ENCODE measurements at regions of chr19 and their contacts with region 1.

Region 1: GRCh38 chr19:50357178-50358100 is 8.0 kb downstream of the NAPSA start:
- DNase-seq: peak; percentile 70 to 93 (median 78)
- ATAC-seq: peak; percentile 85
- H3K4me3 ChIP-seq: peak overlapping the region; percentile 43
- H3K27ac ChIP-seq: peak overlapping the region; percentile 95
- H3K4me1 ChIP-seq: peaks cover 36 to 38% of the 10 kb centered on the region in 2 experiments
- H3K27me3 ChIP-seq: no peaks in the 10 kb centered on the region
- CTCF ChIP-seq: peak; percentile 89 to 91 (median 90)
- EP300 ChIP-seq: no peak
- POLR2A ChIP-seq: peak; percentile 3
- RAD21 ChIP-seq: peak; percentile 86 to 91

Region 2: GRCh38 chr19:50173140-50173539 is 184.3 kb before region 1 on chr19:
- CTCF ChIA-PET with region 1: no interaction called
- POLR2A ChIA-PET with region 1: no interaction called
- in situ Hi-C with region 1: no loop called
- intact Hi-C with region 1: no loop called
- DNase-seq: peak in 2 of 4 experiments; percentile 5 to 14
- ATAC-seq: peak; percentile 68
- H3K4me3 ChIP-seq: no peak overlapping the region
- H3K27ac ChIP-seq: no peak overlapping the region
- H3K4me1 ChIP-seq: peaks cover 3% of the 10 kb centered on the region in 2 experiments; a peak in 4 of 5 replicates
- H3K27me3 ChIP-seq: 0 out of 5 replicates have a peak, but pooled peaks cover 0 to 4% of the 10 kb centered on the region in 2 experiments
- CTCF ChIP-seq: no peak
- EP300 ChIP-seq: peak; percentile 18; the same call in 1 of the 2 replicates
- POLR2A ChIP-seq: no peak
- RAD21 ChIP-seq: no peak

Region 3: GRCh38 chr19:50334741-50335421 is 22.6 kb before region 1 on chr19:
- CTCF ChIA-PET with region 1: no interaction called
- POLR2A ChIA-PET with region 1: no interaction called
- in situ Hi-C with region 1: no loop called
- intact Hi-C with region 1: no loop called
- DNase-seq: no peak
- ATAC-seq: no peak
- H3K4me3 ChIP-seq: no peak overlapping the region
- H3K27ac ChIP-seq: no peak overlapping the region
- H3K4me1 ChIP-seq: peaks cover 36 to 51% of the 10 kb centered on the region in 2 experiments; a peak in 4 of 5 replicates
- H3K27me3 ChIP-seq: no peaks in the 10 kb centered on the region
- CTCF ChIP-seq: no peak
- EP300 ChIP-seq: no peak
- POLR2A ChIP-seq: no peak
- RAD21 ChIP-seq: no peak

Region 4: GRCh38 chr19:50376166-50377050 is 19.0 kb after region 1 on chr19 and contains the start of gene NR1H2:
- CTCF ChIA-PET with region 1: no interaction called
- POLR2A ChIA-PET with region 1: interaction called, 29 read pairs
- in situ Hi-C with region 1: no loop called
- intact Hi-C with region 1: no loop called
- DNase-seq: peak; percentile 83 to 99 (median 90)
- ATAC-seq: peak; percentile 77
- H3K4me3 ChIP-seq: peak within 1 kb of the TSS; percentile 85
- H3K27ac ChIP-seq: peak within 1 kb of the TSS; percentile 100
- H3K4me1 ChIP-seq: peaks cover 34 to 55% of the 10 kb centered on the region in 2 experiments
- H3K27me3 ChIP-seq: no peaks in the 10 kb centered on the region
- CTCF ChIP-seq: no peak
- EP300 ChIP-seq: peak; percentile 64
- POLR2A ChIP-seq: peak; percentile 97
- RAD21 ChIP-seq: no peak
- polyA plus RNA-seq, gene NR1H2: 0.11 to 1.5 TPM

Region 5: DNA sequence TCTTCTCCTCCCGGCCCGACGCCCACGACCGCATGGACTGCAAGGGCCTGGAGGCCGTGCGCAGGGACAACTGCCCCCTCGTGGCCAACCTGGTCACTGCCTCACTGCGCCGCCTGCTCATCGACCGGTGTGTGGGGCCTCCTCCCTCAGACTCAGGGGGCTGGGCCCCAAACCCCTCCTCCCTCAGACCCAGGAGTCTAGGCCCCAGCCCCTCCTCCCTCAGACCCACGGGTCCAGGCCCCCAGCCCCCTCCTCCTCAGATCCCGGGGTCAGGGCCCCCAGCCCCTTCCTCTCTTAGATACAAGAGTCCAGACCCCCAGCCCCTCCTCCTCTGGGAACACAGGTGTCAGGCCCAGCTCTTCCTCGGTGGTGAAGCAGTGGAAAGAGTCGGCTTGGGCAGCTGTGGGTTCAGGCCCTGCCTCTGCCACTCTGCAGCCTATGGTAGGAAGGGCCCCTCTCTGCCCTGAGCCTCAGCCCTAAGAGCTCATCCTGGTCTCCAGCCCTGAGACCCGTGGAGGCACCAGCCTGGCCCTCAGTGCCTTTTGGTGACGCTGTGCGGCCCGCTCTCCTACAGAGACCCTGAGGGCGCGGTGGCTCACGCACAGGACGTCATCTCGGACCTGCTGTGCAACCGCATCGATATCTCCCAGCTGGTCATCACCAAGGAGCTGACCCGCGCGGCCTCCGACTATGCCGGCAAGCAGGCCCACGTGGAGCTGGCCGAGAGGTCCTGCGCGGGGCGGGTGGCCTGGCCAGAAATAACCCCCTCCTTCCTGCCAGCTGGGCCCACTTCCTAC is 57.6 kb after region 1 on chr19:
- CTCF ChIA-PET with region 1: interaction called, 14 read pairs
- POLR2A ChIA-PET with region 1: interaction called, 5 read pairs
- in situ Hi-C with region 1: no loop called
- intact Hi-C with region 1: no loop called
- DNase-seq: peak; percentile 87 to 92 (median 90)
- ATAC-seq: peak; percentile 95
- H3K4me3 ChIP-seq: no peak overlapping the region
- H3K27ac ChIP-seq: peak overlapping the region; percentile 67
- H3K4me1 ChIP-seq: peaks cover 13 to 69% of the 10 kb centered on the region in 2 experiments
- H3K27me3 ChIP-seq: no peaks in the 10 kb centered on the region
- CTCF ChIP-seq: peak; percentile 87 to 95 (median 89)
- EP300 ChIP-seq: no peak
- POLR2A ChIP-seq: peak; percentile 26
- RAD21 ChIP-seq: peak; percentile 69 to 84

Region 6: GRCh38 chr19:50434525-50434924 is 77.1 kb after region 1 on chr19:
- CTCF ChIA-PET with region 1: no interaction called
- POLR2A ChIA-PET with region 1: no interaction called
- in situ Hi-C with region 1: no loop called
- intact Hi-C with region 1: no loop called
- DNase-seq: peak; percentile 47 to 54 (median 50)
- ATAC-seq: peak; percentile 13; the same call in 2 of the 3 replicates
- H3K4me3 ChIP-seq: no peak overlapping the region
- H3K27ac ChIP-seq: no peak overlapping the region
- H3K4me1 ChIP-seq: peaks cover 12 to 42% of the 10 kb centered on the region in 2 experiments; a peak in 4 of 5 replicates
- H3K27me3 ChIP-seq: peaks cover 0 to 25% of the 10 kb centered on the region in 2 experiments; a peak in 3 of 5 replicates
- CTCF ChIP-seq: no peak
- EP300 ChIP-seq: no peak
- POLR2A ChIP-seq: no peak
- RAD21 ChIP-seq: no peak

Region 7: DNA sequence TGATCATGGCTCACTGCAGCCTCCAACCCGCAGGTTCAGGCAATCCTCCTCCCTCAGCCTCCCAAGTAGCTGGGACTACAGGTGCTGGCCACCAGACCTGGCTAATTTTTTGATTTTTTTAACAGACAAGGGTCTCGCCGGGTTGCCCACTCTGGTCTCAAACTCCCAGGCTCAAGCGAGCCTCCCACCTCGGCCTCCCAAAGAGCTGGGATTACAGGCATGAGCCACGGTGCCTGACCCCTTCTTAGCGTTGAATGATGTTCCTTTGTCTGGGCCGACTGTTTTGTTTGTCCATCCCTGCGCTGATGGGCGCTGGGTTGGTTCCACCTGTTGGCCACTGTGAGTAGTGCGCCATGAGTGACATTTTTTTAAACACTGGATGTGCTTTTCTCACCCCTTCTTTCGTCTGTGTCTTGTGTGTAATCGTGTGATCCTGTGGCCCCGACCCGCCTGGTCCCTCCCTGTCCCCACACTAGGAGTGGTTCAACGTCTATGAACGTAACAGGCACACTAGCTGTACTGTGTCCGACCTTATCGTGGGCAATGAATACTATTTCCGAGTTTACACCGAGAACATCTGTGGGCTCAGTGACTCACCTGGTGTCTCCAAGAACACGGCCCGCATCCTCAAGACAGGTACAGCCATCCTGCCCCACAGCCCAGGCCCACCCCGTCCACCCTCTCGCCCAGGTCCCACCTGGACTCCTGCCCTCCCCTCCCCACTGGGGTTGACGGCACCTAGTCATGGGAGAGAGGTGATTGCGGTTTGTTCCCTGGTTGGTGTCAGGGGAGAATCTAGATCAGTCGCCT is 103.8 kb after region 1 on chr19:
- CTCF ChIA-PET with region 1: interaction called, 13 read pairs
- POLR2A ChIA-PET with region 1: interaction called, 9 read pairs
- in situ Hi-C with region 1: no loop called
- intact Hi-C with region 1: loop called (anchors 1 kb)
- DNase-seq: peak; percentile 78 to 88 (median 82)
- ATAC-seq: peak; percentile 90
- H3K4me3 ChIP-seq: no peak overlapping the region
- H3K27ac ChIP-seq: peak overlapping the region; percentile 27; the same call in 1 of the 3 replicates
- H3K4me1 ChIP-seq: peaks cover 8 to 38% of the 10 kb centered on the region in 2 experiments; a peak in 4 of 5 replicates
- H3K27me3 ChIP-seq: peaks cover 6 to 17% of the 10 kb centered on the region in 2 experiments; a peak in 4 of 5 replicates
- CTCF ChIP-seq: peak; percentile 85 to 93 (median 93)
- EP300 ChIP-seq: no peak
- POLR2A ChIP-seq: no peak
- RAD21 ChIP-seq: peak; percentile 74 to 91

Region 8: GRCh38 chr19:50657712-50658440 is 300.4 kb after region 1 on chr19:
- CTCF ChIA-PET with region 1: no interaction called
- POLR2A ChIA-PET with region 1: no interaction called
- in situ Hi-C with region 1: no loop called
- intact Hi-C with region 1: loop called (anchors 5 kb)
- DNase-seq: peak; percentile 96 to 100 (median 98)
- ATAC-seq: peak; percentile 88
- H3K4me3 ChIP-seq: peak overlapping the region; percentile 66
- H3K27ac ChIP-seq: peak overlapping the region; percentile 98
- H3K4me1 ChIP-seq: peaks cover 20 to 51% of the 10 kb centered on the region in 2 experiments
- H3K27me3 ChIP-seq: no peaks in the 10 kb centered on the region; a peak in 1 of 5 replicates
- CTCF ChIP-seq: no peak; a peak in 1 of 6 replicates
- EP300 ChIP-seq: no peak; the same call in 1 of the 2 replicates
- POLR2A ChIP-seq: peak; percentile 82; the same call in 1 of the 2 replicates
- RAD21 ChIP-seq: no peak